Head of caudate nucleus (tissue), 42 donors: ENCODE measurements at regions of chr11 and their contacts with region 1.

Region 1: GRCh38 chr11:11841723-11842420 is at the start of gene USP47:
- DNase-seq: peak; percentile 57 to 95 (median 91)

Region 2: DNA sequence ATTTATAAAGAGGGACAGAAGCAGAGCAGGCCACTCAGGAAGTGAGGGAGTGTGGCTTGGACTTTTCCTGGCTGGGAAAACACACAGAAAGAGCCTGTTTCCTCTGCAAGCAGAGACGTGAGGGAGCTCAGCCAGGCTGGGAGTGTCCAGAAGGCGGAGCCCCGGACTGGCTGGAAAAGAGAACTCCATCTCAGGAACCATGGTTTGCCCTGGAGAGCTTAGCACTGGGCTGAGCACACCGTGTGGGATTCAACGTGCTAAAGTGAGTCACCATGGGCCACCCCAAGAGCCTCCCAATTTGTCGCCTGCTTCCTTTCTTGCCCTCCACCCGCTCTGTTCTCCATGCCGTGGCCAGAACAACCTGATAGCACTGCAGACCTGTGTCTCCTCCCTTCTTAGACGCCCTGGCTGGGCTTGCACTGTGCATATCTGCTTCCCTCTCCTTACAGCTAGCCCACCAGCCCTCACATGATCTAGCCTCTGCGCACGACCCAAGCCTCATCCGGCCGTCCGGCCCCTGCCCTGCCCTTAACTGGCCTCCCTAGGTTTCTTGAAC is 271.9 kb before region 1 on chr11:
- intact Hi-C with region 1: no loop called
- DNase-seq: peak in 21 of 42 donors; percentile 23 to 69 (median 39)

Region 3: DNA sequence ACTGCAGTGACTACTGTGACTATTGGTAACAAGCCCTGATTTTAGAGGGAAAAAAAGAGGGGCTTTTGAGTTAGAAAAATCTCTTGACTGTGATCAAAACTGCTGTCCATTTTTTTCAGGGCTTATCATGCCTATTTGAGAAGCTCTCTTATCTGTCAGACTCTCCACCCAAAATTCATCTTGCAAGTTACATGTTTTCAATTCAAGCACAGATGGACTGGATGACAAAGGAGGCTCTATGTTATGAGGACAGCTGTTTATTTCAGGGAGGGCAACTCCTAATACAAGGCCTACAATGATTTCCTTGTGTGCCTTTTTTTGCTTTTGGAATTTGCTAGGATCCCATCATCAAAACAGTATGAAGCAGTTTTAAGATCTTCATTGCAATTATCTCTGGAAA is 35.3 kb before region 1 on chr11:
- intact Hi-C with region 1: loop called (anchors 5 kb)
- DNase-seq: peak in 9 of 42 donors; percentile 16 to 70 (median 39)

Region 4: DNA sequence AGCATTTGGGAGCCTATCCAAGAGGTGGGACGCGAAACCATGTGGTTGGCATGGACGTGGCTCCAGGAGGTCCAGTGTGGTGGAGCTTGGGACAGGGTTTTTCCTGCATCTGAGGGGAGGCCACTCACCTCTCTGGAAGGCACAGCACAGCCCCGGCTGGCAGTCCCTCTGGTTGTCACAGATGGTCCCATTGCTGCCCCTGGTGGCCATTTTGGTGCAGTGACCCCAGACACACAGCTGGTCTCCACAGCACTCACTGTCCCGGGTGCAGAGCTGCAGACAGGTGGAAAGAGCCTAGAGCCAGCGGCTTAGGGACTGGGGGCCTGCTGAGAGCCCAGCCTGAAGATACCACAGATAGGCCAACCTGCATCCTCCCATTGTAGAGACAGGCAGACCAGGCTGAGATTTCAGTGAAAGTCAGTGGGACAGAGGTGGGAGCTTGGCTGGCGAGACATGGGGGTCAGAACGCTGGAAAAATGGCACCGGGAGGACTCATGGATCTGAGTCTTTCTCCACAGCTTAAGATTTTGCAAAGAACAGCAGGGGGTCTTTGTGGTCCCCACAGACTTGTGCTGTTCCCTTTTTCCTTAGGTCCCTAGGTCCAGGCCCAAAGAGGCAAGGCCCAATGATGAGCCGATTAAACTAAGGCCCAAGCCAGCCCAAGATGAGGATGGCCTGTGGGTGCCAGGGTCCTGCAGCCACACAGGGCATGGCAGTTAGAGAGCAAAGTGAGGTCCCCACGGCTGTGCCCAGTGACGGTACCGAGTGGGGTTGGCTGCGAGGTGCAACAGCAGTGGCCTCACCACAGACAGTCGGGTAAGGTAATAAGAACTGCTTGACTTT is 125.2 kb after region 1 on chr11:
- intact Hi-C with region 1: loop called (anchors 10 kb)
- DNase-seq: peak; percentile 65 to 92 (median 80)